ENCODE measurements at regions of chr11 and their contacts with region 1.

Region 1: GRCh38 chr11:121194731-121195596 is 93.9 kb downstream of the TECTA start:
- DNase-seq: peak in 1 of 2 experiments; percentile 64
- H3K4me3 ChIP-seq: no peak overlapping the region
- H3K27ac ChIP-seq: no peak overlapping the region
- H3K4me1 ChIP-seq: peaks cover 0 to 7% (median 3%) of the 10 kb centered on the region in 4 experiments; a peak in 4 of 7 replicates
- H3K27me3 ChIP-seq: no peaks in the 10 kb centered on the region
- CTCF ChIP-seq: peak in 2 of 3 experiments; percentile 70 to 73; a peak in 3 of 4 replicates
- EP300 ChIP-seq: no peak
- POLR2A ChIP-seq: no peak
- RAD21 ChIP-seq: peak; percentile 85 to 87

Region 2: DNA sequence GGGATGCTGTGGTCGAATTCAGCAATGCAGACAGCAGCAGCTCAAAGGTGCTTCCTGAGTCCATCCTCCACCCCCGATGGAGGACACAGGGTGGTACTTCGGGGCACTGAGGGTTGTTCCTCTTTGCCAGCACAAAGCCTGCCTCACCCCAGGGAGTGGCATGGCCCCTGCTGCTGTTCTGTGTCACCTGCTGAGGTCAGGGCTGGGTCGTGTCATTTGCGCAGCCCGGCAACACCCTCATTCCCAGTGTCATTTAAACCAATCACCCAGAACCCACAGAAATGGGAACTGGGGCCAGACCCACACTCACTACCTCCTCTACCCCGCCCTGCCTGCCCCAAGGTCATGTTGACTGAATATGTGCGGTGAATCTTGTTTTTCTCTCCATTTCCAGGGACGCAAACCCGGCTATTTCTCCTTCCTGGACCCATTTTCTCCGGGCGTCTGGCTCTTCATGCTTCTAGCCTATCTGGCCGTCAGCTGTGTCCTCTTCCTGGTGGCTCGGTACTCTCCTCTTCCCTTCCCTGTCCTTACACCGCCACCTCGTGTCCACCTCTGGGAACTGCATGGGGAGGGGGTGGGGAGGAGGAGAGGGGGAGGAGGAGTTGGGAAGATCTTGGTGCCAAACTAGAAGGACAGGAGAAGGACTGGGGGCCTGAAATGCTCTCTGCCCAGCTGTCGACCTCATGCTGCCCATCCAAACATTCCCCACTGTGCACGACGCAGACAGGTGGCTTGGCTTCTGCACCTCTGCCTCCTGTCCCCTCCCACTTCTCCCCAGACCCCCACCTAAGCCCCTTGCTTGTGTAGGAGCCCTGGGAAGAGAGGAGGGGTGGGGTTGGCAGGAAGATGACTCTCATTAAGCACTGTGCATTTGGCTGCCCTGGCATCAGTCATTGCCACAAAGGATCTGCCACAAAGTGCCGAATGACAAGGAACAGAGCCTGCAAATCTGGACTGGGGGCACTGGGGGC is 242.2 kb before region 1 on chr11:
- CTCF ChIA-PET with region 1: interaction called, 20 read pairs
- POLR2A ChIA-PET with region 1: no interaction called
- DNase-seq: peak; percentile 60 to 97
- H3K4me3 ChIP-seq: peak overlapping the region in 1 of 4 experiments; percentile 18; a peak in 1 of 8 replicates
- H3K27ac ChIP-seq: no peak overlapping the region
- H3K4me1 ChIP-seq: peaks cover 11 to 24% (median 15%) of the 10 kb centered on the region in 4 experiments
- H3K27me3 ChIP-seq: no peaks in the 10 kb centered on the region; a peak in 1 of 7 replicates
- CTCF ChIP-seq: peak; percentile 84 to 94 (median 93)
- EP300 ChIP-seq: 0 out of 3 replicates have a peak, but pooled peaks of 1 of the 2 experiments have one; percentile 27
- POLR2A ChIP-seq: no peak
- RAD21 ChIP-seq: peak; percentile 94 to 98

Region 3: DNA sequence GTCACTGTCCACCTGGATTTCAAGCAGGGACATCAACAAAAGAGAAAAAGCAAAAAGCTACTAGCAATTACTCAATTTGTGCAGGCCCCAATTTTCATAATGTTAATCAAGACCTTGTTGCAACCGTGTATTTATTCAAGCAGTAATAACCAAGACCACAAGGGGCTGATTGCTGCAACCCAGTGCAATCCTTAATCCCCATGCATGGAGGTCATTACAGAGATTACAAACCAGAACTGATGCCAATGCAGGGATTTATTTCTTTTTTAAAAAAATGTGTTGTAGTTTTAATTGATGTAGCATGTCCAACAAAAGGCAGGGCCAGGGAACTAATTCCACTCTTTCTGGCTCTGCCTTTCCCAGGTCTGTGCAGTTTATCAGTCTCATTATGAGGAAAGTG is 75.5 kb before region 1 on chr11:
- CTCF ChIA-PET with region 1: interaction called, 13 read pairs
- POLR2A ChIA-PET with region 1: no interaction called
- DNase-seq: no peak
- H3K4me3 ChIP-seq: no peak overlapping the region
- H3K27ac ChIP-seq: no peak overlapping the region
- H3K4me1 ChIP-seq: no peaks in the 10 kb centered on the region
- H3K27me3 ChIP-seq: no peaks in the 10 kb centered on the region
- CTCF ChIP-seq: peak in 1 of 3 experiments; percentile 15; a peak in 1 of 4 replicates
- EP300 ChIP-seq: no peak
- POLR2A ChIP-seq: no peak
- RAD21 ChIP-seq: peak in 1 of 2 experiments; percentile 18; a peak in 1 of 4 replicates

Region 4: GRCh38 chr11:121163658-121164308 is 31.2 kb before region 1 on chr11:
- CTCF ChIA-PET with region 1: interaction called, 12 read pairs
- POLR2A ChIA-PET with region 1: no interaction called
- DNase-seq: no peak
- H3K4me3 ChIP-seq: no peak overlapping the region
- H3K27ac ChIP-seq: no peak overlapping the region
- H3K4me1 ChIP-seq: peaks cover 0 to 10% (median 9%) of the 10 kb centered on the region in 4 experiments; a peak in 5 of 7 replicates
- H3K27me3 ChIP-seq: no peaks in the 10 kb centered on the region
- CTCF ChIP-seq: no peak
- EP300 ChIP-seq: no peak
- POLR2A ChIP-seq: no peak
- RAD21 ChIP-seq: no peak

Region 5: DNA sequence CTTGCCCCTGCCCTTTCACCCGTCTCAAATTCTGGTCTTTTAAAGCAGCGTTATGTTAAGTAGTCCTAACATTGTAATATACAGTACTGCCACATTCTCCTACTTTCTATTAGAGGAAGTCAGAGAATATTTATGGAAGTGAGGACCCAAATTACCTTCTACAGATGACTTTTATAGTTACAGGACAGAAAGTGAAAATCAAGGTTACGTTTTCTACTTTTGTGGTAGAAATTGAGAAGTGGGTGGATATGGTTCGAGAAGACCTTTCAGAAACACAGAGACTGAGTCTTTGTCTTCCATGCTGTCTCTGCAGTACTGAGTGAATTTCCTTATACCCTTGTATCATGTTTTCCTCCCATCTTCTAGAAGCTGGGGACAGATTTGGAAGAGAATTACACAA is 114.7 kb after region 1 on chr11:
- CTCF ChIA-PET with region 1: no interaction called
- POLR2A ChIA-PET with region 1: no interaction called
- DNase-seq: no peak
- H3K4me3 ChIP-seq: no peak overlapping the region
- H3K27ac ChIP-seq: no peak overlapping the region
- H3K4me1 ChIP-seq: no peaks in the 10 kb centered on the region
- H3K27me3 ChIP-seq: no peaks in the 10 kb centered on the region
- CTCF ChIP-seq: no peak
- EP300 ChIP-seq: no peak
- POLR2A ChIP-seq: no peak
- RAD21 ChIP-seq: no peak

Measured in H1 (cell line).